Left colon (tissue), 2 donors: ENCODE measurements at regions of chr1 and their contacts with region 1.

Region 1: DNA sequence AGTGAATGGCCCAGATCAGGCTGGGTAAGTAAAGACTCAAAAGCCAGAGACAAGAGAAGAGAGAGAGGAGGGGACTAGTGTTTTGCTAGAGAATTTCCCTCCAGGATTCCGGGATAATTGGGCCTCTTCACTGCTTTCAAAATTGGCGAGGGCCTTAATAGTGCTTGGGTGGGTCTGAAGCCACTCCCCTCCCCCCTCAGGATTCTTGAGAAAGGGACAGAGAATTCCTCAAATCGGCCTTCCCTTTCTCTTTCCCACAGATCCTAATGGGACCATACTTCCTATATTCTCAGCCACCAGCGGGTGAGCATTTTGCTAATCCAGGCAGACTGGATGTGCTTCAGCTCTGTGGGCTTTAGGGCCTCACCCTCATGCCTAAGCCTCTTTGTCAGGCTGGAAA is 11.9 kb downstream of the SFN start:
- DNase-seq: no peak
- ATAC-seq: no peak

Region 2: GRCh38 chr1:26602378-26602959 is 272.4 kb before region 1 on chr1:
- intact Hi-C with region 1: loop called in 1 of 2 experiments (anchors 10 kb)
- DNase-seq: peak in 1 of 2 donors; percentile 12
- ATAC-seq: peak; percentile 72

Region 3: DNA sequence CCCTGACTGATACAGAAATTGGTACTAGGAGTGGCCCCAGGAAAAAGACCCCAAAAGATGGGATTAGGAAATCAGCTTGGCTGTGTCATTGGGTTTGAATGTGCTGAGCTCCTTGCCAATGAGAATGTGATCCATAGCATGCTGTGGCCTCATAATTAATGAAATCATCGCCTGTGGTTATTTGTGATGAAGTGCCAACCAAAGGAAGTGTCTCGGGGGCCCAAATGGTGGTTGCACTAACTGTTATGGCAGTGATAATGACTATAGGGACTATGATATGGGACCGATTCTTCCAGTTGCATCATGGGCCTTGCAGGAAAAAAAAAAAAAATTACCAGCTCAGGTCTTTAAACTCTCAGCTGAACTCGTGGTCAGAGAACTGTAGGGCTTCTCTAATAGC is 63.8 kb before region 1 on chr1:
- intact Hi-C with region 1: loop called in 1 of 2 experiments (anchors 10 kb)
- DNase-seq: no peak
- ATAC-seq: no peak